ENCODE measurements at regions of chr7 and their contacts with region 1.

Region 1: GRCh38 chr7:116588641-116589594 is 64.1 kb downstream of the CAV1 start:
- DNase-seq: no peak
- ATAC-seq: peak; percentile 29 to 58 (median 50)
- H3K4me3 ChIP-seq: no peak overlapping the region
- H3K27ac ChIP-seq: peak overlapping the region in 9 of 12 donors; percentile 10 to 57 (median 35)
- H3K4me1 ChIP-seq: peaks cover 0 to 43% (median 31%) of the 10 kb centered on the region in 12 donors
- H3K27me3 ChIP-seq: peaks cover 0 to 5% (median 0%) of the 10 kb centered on the region in 9 donors
- CTCF ChIP-seq: peak; percentile 58 to 88 (median 75)
- POLR2A ChIP-seq: no peak

Region 2: GRCh38 chr7:116173051-116174028 is 415.6 kb before region 1 on chr7:
- intact Hi-C with region 1: loop called in 9 of 10 experiments (anchors 5 to 10 kb)
- DNase-seq: no peak
- ATAC-seq: peak in 3 of 4 donors; percentile 36 to 59 (median 57)
- H3K4me3 ChIP-seq: no peak overlapping the region
- H3K27ac ChIP-seq: no peak overlapping the region
- H3K4me1 ChIP-seq: peaks cover 0 to 4% (median 0%) of the 10 kb centered on the region in 12 donors
- H3K27me3 ChIP-seq: no peaks in the 10 kb centered on the region
- CTCF ChIP-seq: peak; percentile 30 to 68 (median 58)
- POLR2A ChIP-seq: no peak

Region 3: DNA sequence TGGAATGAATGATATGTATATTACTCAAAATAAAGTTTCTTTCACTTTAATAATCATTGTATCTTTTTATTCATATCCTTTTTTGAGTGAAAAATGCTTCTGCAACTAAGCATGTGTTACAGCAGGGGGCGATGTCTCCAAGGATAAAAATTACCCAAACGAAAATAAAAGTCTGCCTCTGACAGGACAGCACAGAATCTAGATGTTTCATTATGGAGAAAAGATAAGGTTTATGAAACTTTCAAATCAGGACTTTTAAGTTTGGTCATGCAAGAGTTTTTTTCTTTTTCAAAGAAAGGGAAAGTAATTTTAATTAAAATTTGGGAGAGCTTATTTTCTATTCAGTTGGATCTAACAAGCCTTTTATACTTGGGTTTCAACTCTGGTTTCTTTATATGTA is 330.2 kb before region 1 on chr7:
- intact Hi-C with region 1: loop called (anchors 1 to 2 kb)
- DNase-seq: peak in 1 of 5 donors; percentile 27
- ATAC-seq: peak in 3 of 4 donors; percentile 36 to 69 (median 69)
- H3K4me3 ChIP-seq: no peak overlapping the region
- H3K27ac ChIP-seq: peak overlapping the region in 3 of 12 donors; percentile 6 to 49 (median 32)
- H3K4me1 ChIP-seq: peaks cover 0 to 9% (median 6%) of the 10 kb centered on the region in 12 donors
- H3K27me3 ChIP-seq: no peaks in the 10 kb centered on the region
- CTCF ChIP-seq: peak; percentile 56 to 93 (median 84)
- POLR2A ChIP-seq: no peak

Region 4: GRCh38 chr7:116665332-116665996 is 76.5 kb after region 1 on chr7:
- intact Hi-C with region 1: loop called in 5 of 10 experiments (anchors 5 to 10 kb)
- DNase-seq: no peak
- ATAC-seq: no peak
- H3K4me3 ChIP-seq: no peak overlapping the region
- H3K27ac ChIP-seq: no peak overlapping the region
- H3K4me1 ChIP-seq: peaks cover 0 to 16% (median 0%) of the 10 kb centered on the region in 12 donors
- H3K27me3 ChIP-seq: peaks cover 0 to 3% (median 0%) of the 10 kb centered on the region in 9 donors
- CTCF ChIP-seq: no peak
- POLR2A ChIP-seq: no peak

Region 5: GRCh38 chr7:116786791-116787443 is 198.0 kb after region 1 on chr7:
- intact Hi-C with region 1: loop called in 1 of 10 experiments (anchors 5 kb)
- DNase-seq: no peak
- ATAC-seq: peak in 1 of 4 donors; percentile 32
- H3K4me3 ChIP-seq: no peak overlapping the region
- H3K27ac ChIP-seq: no peak overlapping the region
- H3K4me1 ChIP-seq: peaks cover 0 to 5% (median 0%) of the 10 kb centered on the region in 12 donors
- H3K27me3 ChIP-seq: no peaks in the 10 kb centered on the region
- CTCF ChIP-seq: peak; percentile 20 to 54 (median 32)
- POLR2A ChIP-seq: no peak

Measured in heart left ventricle (tissue), 16 donors.